PC-9 (cell line): ENCODE measurements at regions of chr7 and their contacts with region 1.

Region 1: DNA sequence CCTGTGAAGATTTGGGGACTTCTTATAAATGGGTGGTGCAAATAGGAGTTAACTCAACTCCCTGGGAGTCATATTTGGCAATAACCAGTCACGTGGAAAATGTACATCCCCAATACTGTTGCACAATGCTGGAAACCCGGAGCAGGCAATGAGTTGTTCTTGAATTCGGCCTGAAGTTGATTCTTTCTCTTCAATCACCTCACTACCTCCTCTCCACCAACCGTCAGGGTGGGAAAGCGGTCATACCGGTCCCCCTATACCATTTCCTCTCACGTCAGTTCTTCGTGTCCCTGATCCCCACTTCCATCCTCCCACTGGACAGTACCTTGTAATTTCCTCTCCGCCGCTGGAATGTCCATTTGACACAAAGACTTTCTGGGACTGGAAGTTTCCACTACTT is 2.8 kb downstream of the GIMAP5 start:
- DNase-seq: no peak
- H3K4me3 ChIP-seq: no peak overlapping the region
- H3K27ac ChIP-seq: no peak overlapping the region
- H3K4me1 ChIP-seq: no peaks in the 10 kb centered on the region
- H3K27me3 ChIP-seq: peaks cover 66% of the 10 kb centered on the region
- CTCF ChIP-seq: no peak

Region 2: GRCh38 chr7:150400008-150400787 is 339.9 kb before region 1 on chr7:
- CTCF ChIA-PET with region 1: no interaction called
- POLR2A ChIA-PET with region 1: no interaction called
- intact Hi-C with region 1: no loop called
- DNase-seq: peak; percentile 86 to 91
- H3K4me3 ChIP-seq: no peak overlapping the region
- H3K27ac ChIP-seq: peak overlapping the region; percentile 48
- H3K4me1 ChIP-seq: peaks cover 50% of the 10 kb centered on the region
- H3K27me3 ChIP-seq: no peaks in the 10 kb centered on the region
- CTCF ChIP-seq: no peak

Region 3: GRCh38 chr7:151047970-151048815 is 308.1 kb after region 1 on chr7 and contains the start of gene ASIC3:
- CTCF ChIA-PET with region 1: interaction called, 17 read pairs
- POLR2A ChIA-PET with region 1: no interaction called
- intact Hi-C with region 1: no loop called
- DNase-seq: no peak
- H3K4me3 ChIP-seq: no peak within 1 kb of the TSS
- H3K27ac ChIP-seq: no peak within 1 kb of the TSS
- H3K4me1 ChIP-seq: peaks cover 18% of the 10 kb centered on the region
- H3K27me3 ChIP-seq: no peaks in the 10 kb centered on the region
- CTCF ChIP-seq: no peak
- total RNA-seq, gene ASIC3: 7.6 and 10.5 TPM in 2 replicates